ENCODE measurements at regions of chr17 and their contacts with region 1.

Region 1: GRCh38 chr17:7045909-7046724 is 2.2 kb upstream of the SLC16A11 start:
- DNase-seq: peak; percentile 64
- H3K4me3 Mint-ChIP-seq: peak overlapping the region; percentile 65
- H3K27ac Mint-ChIP-seq: peak overlapping the region; percentile 71
- H3K4me1 Mint-ChIP-seq: peaks cover 42% of the 10 kb centered on the region
- H3K27me3 Mint-ChIP-seq: peaks cover 60% of the 10 kb centered on the region

Region 2: GRCh38 chr17:7177196-7177953 is 131.3 kb after region 1 on chr17:
- CTCF ChIA-PET with region 1: interaction called, 25 read pairs
- DNase-seq: peak; percentile 79
- H3K4me3 Mint-ChIP-seq: peak overlapping the region; percentile 34
- H3K27ac Mint-ChIP-seq: no peak overlapping the region
- H3K4me1 Mint-ChIP-seq: peaks cover 14% of the 10 kb centered on the region
- H3K27me3 Mint-ChIP-seq: peaks cover 11% of the 10 kb centered on the region